Mammary epithelial cell (primary cell): ENCODE measurements at regions of chr10 and their contacts with region 1.

Region 1: GRCh38 chr10:3452173-3452626 is 279.6 kb upstream of the PITRM1 start:
- DNase-seq: peak; percentile 56
- H3K4me3 ChIP-seq: no peak overlapping the region
- H3K27ac ChIP-seq: peak overlapping the region; percentile 89
- H3K4me1 ChIP-seq: peaks cover 38% of the 10 kb centered on the region
- H3K27me3 ChIP-seq: no peaks in the 10 kb centered on the region
- CTCF ChIP-seq: peak; percentile 25 to 57

Region 2: GRCh38 chr10:3347413-3348182 is 104.6 kb before region 1 on chr10:
- CTCF ChIA-PET with region 1: no interaction called
- dilution Hi-C with region 1: no loop called
- in situ Hi-C with region 1: no loop called
- intact Hi-C with region 1: no loop called
- DNase-seq: no peak
- H3K4me3 ChIP-seq: no peak overlapping the region
- H3K27ac ChIP-seq: no peak overlapping the region
- H3K4me1 ChIP-seq: no peaks in the 10 kb centered on the region
- H3K27me3 ChIP-seq: no peaks in the 10 kb centered on the region
- CTCF ChIP-seq: no peak

Region 3: GRCh38 chr10:3398825-3399646 is 53.2 kb before region 1 on chr10:
- CTCF ChIA-PET with region 1: no interaction called
- dilution Hi-C with region 1: loop called (anchors 5 kb)
- in situ Hi-C with region 1: no loop called
- intact Hi-C with region 1: no loop called
- DNase-seq: peak; percentile 76
- H3K4me3 ChIP-seq: no peak overlapping the region
- H3K27ac ChIP-seq: no peak overlapping the region
- H3K4me1 ChIP-seq: peaks cover 6% of the 10 kb centered on the region
- H3K27me3 ChIP-seq: peaks cover 2% of the 10 kb centered on the region
- CTCF ChIP-seq: no peak